ENCODE measurements at regions of chr11 and their contacts with region 1.

Region 1: DNA sequence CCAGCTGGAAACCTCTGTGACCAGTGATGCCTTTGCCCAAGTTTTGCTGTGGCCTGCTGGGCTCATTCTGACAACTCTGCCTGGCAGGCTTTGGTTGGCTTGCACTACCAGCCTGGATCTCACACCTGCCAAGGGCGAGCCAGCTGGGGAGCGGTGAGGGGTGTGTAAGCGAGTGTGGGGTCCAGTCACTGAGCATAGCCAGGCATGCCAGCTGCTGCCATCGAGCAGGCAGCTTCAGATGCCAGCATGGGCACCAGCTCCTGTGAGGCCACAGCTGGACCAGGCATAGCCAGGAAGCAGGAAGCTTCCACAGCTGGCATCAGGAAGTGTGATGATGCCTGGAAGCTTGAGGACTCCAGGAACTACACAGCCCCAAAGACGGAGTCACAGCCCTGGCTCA is 1674.6 kb downstream of the LRRC4C start:
- DNase-seq: no peak

Region 2: DNA sequence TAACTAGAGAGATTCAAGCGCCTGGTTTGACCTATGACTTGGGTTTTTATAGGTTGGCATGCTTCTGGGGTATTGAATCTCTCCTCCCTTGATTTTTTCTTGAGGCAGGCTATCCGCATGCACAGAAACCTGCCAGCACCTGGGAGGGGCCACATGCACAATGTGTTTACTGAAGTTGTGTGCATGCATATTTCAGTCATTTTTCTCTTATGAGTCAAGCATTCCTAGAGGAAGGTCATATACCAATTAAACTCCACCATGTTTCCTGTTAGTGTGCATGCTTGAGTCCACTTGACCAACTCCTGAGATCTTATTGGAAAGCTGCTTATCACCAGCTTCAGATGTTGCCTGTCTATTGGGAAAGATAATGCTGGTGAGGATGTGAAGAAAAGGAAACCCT is 43.8 kb before region 1 on chr11:
- intact Hi-C with region 1: loop called in 1 of 2 experiments (anchors 1 kb)
- DNase-seq: no peak

Region 3: GRCh38 chr11:39860931-39861330 is 76.1 kb after region 1 on chr11:
- intact Hi-C with region 1: no loop called
- DNase-seq: no peak